ENCODE measurements at regions of chr7 and their contacts with region 1.

Region 1: DNA sequence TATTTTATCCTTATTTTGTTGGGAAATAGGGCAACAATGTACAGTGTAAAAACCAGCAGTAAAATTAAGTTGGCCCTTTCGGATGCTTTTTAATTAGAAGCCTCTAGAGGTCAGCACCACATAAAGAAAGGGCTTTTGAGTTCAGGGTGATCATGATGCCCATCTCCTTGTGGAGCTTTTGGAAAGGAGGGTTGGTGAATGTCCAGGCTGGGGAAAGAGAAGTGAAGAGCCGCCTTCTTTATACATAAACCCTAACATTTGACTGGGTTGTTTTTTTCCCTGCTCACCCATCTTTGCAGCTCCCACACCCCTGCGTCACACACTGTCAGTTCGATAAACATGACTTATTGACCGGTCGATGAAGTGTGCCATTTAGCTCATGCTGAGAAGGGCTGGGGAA is 29.8 kb downstream of the MTURN start:
- DNase-seq: no peak
- ATAC-seq: peak; percentile 58 to 65
- H3K4me3 ChIP-seq: no peak overlapping the region
- H3K27ac ChIP-seq: no peak overlapping the region
- H3K4me1 ChIP-seq: peaks cover 2% of the 10 kb centered on the region
- H3K27me3 ChIP-seq: no peaks in the 10 kb centered on the region

Region 2: GRCh38 chr7:30105208-30105607 is 59.4 kb before region 1 on chr7:
- intact Hi-C with region 1: no loop called
- DNase-seq: no peak
- ATAC-seq: no peak
- H3K4me3 ChIP-seq: no peak overlapping the region
- H3K27ac ChIP-seq: no peak overlapping the region
- H3K4me1 ChIP-seq: no peaks in the 10 kb centered on the region
- H3K27me3 ChIP-seq: no peaks in the 10 kb centered on the region

Region 3: DNA sequence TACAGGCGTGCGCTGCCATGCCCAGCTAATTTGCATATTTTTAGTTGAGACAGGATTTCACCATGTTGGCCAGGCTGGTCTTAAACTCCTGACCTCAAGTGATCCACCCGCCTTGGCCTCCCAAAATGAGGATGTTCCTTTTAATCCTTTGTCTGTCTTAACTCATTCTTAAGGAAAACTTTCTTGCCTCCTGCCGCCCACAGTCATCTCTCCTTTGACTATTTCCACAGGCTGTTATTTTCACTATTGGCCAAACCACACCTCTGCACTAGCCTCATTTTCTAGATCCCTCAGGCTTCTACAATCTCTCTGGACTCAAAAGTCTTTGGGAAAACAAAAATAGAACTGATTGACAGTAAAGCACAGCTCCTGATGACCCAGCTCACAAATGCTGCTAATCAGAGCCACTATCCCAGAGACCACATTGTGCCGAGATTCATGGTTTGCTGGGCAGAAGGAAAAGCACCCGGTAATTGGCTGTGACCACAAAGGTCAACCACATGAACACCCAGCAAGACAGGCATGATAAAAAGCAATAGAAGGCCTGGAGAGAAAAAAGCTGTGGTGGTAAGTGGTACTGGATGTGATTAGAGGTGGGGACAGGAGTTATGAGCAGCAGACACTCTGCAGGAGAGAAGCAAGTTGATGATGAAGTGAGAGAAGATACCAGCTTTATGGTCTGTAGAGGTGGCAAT is 75.7 kb after region 1 on chr7:
- intact Hi-C with region 1: loop called in 1 of 4 experiments (anchors 10 kb)
- DNase-seq: no peak
- ATAC-seq: peak; percentile 75 to 88
- H3K4me3 ChIP-seq: no peak overlapping the region
- H3K27ac ChIP-seq: no peak overlapping the region
- H3K4me1 ChIP-seq: peaks cover 3% of the 10 kb centered on the region
- H3K27me3 ChIP-seq: no peaks in the 10 kb centered on the region

Region 4: DNA sequence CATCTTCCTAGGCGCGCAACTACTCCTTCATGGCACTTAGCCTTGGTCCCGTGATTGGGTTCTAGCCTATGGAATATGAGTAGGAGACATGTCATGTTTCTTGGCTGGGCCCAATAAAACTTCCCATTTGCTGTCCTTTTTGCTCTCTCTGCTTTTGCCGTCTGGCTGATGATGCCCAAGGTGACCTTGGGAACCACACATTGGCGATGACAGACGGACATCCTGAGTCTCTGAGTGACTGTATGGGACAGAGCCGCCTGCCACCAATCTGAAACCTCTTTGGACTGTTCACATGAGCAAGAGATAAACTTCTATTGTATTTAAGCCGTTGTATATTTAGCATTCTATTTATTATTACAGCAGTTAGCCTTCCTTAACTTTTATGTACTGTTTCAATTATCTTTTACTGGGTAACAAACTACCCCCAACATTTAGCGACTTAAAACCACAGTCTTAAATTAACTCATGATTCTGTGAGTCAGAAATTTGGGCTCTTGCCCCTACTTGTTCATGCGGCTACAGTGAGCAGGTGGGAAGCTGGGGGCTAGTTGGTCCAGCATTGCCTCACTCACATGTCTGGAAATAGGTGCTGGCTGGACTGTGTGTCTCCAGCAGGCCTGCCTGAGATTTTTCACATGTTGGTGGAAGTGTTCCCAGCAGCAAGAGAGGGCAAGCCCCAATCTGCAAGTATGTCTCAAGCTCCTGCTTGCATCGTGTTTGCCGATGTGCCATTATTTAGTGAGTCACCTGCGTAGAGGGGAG is 242.3 kb after region 1 on chr7:
- intact Hi-C with region 1: loop called in 3 of 4 experiments (anchors 2 to 10 kb)
- DNase-seq: no peak
- ATAC-seq: no peak
- H3K4me3 ChIP-seq: no peak overlapping the region
- H3K27ac ChIP-seq: no peak overlapping the region
- H3K4me1 ChIP-seq: no peaks in the 10 kb centered on the region
- H3K27me3 ChIP-seq: no peaks in the 10 kb centered on the region

Region 5: DNA sequence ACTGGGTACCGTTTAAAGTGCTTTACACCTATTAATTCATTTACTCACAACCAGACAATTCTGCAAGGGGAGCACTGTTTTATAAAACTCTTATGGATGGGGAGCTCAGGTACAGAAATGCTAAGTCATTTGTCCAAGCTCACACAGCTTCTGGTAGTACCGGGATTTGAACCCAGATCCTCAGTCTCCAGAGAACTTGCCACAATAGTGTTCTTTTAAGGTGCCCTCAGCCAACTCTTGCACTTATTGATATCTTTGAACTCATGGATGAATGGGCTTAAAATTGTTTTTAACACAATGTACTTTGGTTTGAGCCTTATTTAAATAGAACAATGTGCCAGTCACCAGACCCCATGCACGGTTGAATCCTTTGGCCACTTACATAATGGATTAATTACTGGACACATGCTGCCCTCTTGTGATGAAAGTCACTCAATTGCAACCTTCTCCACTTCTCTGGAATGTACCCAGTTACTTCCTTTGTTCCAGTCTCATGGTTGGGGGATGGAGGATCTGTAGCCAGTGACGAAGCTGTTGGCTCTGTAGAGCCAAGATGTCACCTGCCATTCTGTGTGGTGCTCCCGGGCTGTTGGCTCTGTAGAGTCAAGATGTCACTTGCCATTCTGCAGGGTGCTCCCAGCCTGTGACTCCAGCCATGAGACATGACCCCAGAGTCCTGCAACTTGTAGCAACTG is 248.4 kb after region 1 on chr7:
- intact Hi-C with region 1: loop called in 3 of 4 experiments (anchors 2 to 10 kb)
- DNase-seq: no peak
- ATAC-seq: peak; percentile 91 to 94
- H3K4me3 ChIP-seq: no peak overlapping the region
- H3K27ac ChIP-seq: no peak overlapping the region
- H3K4me1 ChIP-seq: no peaks in the 10 kb centered on the region
- H3K27me3 ChIP-seq: no peaks in the 10 kb centered on the region

Region 6: GRCh38 chr7:30564243-30564892 is 399.8 kb after region 1 on chr7:
- intact Hi-C with region 1: loop called in 2 of 4 experiments (anchors 10 kb)
- DNase-seq: peak; percentile 81 to 89 (median 83)
- ATAC-seq: peak; percentile 91 to 93
- H3K4me3 ChIP-seq: no peak overlapping the region
- H3K27ac ChIP-seq: no peak overlapping the region
- H3K4me1 ChIP-seq: peaks cover 6% of the 10 kb centered on the region
- H3K27me3 ChIP-seq: no peaks in the 10 kb centered on the region

Measured in right cardiac atrium (tissue), 5 donors.